IMR-90 (cell line): ENCODE measurements at regions of chr1 and their contacts with region 1.

Region 1: GRCh38 chr1:6401673-6402072 is 8.1 kb upstream of the ACOT7 start:
- DNase-seq: no peak
- ATAC-seq: no peak
- H3K4me3 ChIP-seq: no peak overlapping the region
- H3K27ac ChIP-seq: no peak overlapping the region
- H3K4me1 ChIP-seq: no peaks in the 10 kb centered on the region
- H3K27me3 ChIP-seq: peaks cover 9% of the 10 kb centered on the region
- CTCF ChIP-seq: no peak
- POLR2A ChIP-seq: no peak
- RAD21 ChIP-seq: no peak

Region 2: DNA sequence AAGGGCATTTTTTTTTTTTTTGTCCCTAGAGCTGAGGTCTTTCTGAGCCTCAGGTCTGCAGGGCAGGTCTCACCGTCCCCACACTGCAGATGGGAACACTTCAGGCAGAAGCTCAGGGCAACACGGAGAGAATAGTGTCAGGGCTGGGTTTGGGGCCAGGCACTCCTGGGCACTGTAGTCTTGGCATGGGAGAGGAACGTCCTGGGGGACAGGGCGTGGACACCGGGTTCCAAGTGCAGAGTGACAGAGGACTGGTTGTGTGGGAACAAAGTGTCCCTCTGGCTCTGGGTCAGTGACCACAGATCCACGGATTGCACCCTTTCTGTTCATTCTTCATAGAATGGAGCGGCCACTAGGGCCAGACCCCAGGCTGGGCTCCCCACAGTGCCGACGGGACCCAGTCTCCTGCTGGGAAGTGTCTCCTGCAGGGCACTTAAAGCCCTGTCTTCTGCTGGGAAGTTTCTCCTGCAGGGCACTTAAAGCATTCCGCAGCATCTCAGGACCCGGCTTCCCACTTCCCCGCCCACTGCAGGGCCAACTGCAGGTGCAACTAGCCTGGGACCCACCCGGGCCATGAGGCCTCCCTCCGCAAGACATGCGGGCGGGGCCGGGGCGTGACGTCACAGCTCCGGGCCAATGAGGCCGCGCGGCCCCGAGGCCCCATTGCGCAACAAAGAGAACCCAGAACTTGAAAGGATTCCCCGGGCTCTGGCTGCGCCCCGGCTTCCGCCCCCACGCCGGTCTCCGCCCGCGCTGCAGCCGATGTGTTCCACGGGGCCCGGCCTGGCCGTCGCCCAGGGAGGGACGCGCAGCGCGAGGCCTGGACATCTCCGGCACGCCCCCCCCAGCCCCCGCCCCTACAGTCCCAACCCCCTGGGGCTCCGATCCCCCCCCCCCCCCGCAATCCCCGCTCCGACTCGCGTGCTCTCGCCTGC is 141.9 kb before region 1 on chr1:
- CTCF ChIA-PET with region 1: no interaction called
- POLR2A ChIA-PET with region 1: no interaction called
- dilution Hi-C with region 1: no loop called
- in situ Hi-C with region 1: loop called (anchors 10 kb)
- intact Hi-C with region 1: no loop called
- DNase-seq: peak; percentile 72
- ATAC-seq: peak; percentile 61
- H3K4me3 ChIP-seq: peak overlapping the region; percentile 75
- H3K27ac ChIP-seq: no peak overlapping the region
- H3K4me1 ChIP-seq: peaks cover 2% of the 10 kb centered on the region; the same call in 1 of the 2 replicates
- H3K27me3 ChIP-seq: no peaks in the 10 kb centered on the region
- CTCF ChIP-seq: no peak
- POLR2A ChIP-seq: no peak
- RAD21 ChIP-seq: no peak

Region 3: GRCh38 chr1:6329851-6330250 is 71.8 kb before region 1 on chr1:
- CTCF ChIA-PET with region 1: no interaction called
- POLR2A ChIA-PET with region 1: no interaction called
- dilution Hi-C with region 1: no loop called
- in situ Hi-C with region 1: no loop called
- intact Hi-C with region 1: no loop called
- DNase-seq: peak; percentile 63
- ATAC-seq: peak; percentile 31
- H3K4me3 ChIP-seq: no peak overlapping the region
- H3K27ac ChIP-seq: peak overlapping the region; percentile 55; the same call in 1 of the 2 replicates
- H3K4me1 ChIP-seq: peaks cover 14% of the 10 kb centered on the region
- H3K27me3 ChIP-seq: no peaks in the 10 kb centered on the region
- CTCF ChIP-seq: no peak
- POLR2A ChIP-seq: no peak
- RAD21 ChIP-seq: no peak